ENCODE measurements at regions of chr20 and their contacts with region 1.

Region 1: GRCh38 chr20:49245921-49246740 is 26.9 kb downstream of the DDX27 start:
- DNase-seq: peak; percentile 17
- H3K4me3 ChIP-seq: no peak overlapping the region
- CTCF ChIP-seq: peak; percentile 59

Region 2: DNA sequence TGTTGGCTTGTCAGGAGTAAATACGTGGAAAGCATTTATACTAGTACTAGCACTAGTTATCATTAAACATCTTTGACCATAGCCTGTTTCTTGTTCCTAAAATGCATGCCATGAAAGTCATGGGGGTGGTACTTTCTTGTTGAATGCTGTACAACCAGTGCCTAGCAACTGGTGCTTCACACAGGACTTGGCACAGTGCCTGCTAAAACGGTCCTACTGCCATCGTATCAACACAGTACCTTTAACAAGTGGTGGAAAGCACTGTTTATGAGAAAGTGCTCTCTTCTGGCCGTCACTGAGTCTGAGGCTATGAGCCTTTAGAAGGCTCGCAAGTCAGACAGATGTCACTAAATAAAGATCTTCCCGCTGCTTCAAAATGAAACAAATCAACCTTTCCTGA is 10.1 kb after region 1 on chr20:
- CTCF ChIA-PET with region 1: interaction called, 12 read pairs
- POLR2A ChIA-PET with region 1: interaction called, 6 read pairs
- DNase-seq: no peak
- H3K4me3 ChIP-seq: no peak overlapping the region
- CTCF ChIP-seq: no peak

Region 3: GRCh38 chr20:49262444-49262843 is 16.3 kb after region 1 on chr20:
- CTCF ChIA-PET with region 1: interaction called, 21 read pairs
- POLR2A ChIA-PET with region 1: no interaction called
- DNase-seq: no peak
- H3K4me3 ChIP-seq: no peak overlapping the region
- CTCF ChIP-seq: no peak

Region 4: DNA sequence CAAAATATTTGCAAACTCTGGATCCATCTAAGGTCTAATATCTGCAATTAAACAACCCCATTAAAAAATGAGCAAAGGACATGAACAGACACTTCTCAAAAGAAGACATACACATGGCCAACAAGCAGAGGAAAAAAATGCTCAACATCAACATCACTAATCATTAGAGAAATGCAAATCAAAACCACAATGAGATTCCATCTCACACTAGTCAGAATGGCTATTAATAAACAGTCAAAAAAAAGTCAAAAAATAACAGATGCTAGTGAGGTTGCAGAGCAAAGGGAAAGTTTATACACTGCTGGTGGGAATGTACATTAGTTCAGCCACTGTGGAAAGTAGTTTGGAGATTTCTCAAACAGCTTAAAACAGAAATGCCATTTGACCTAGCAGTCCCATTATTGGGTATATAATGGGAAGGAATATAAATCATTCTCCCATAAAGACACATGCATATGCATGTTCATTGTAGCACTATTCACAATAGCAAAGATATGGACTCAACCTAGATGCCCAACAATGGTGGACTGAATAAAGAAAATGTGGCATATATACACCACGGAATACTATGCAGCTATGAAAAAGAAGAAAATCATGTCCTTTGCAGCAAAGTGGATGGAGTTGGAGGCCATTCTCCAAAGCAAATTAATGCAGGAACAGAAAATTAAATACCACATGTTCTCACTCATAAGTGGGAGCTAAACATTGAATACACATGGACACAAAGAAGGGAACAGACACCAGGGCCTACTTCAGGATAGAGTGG is 22.7 kb after region 1 on chr20:
- CTCF ChIA-PET with region 1: interaction called, 21 read pairs
- POLR2A ChIA-PET with region 1: no interaction called
- DNase-seq: no peak
- H3K4me3 ChIP-seq: no peak overlapping the region
- CTCF ChIP-seq: no peak

Region 5: GRCh38 chr20:49278036-49278817 is 32.1 kb after region 1 on chr20 and contains the start of gene ZNFX1:
- CTCF ChIA-PET with region 1: interaction called, 17 read pairs
- POLR2A ChIA-PET with region 1: interaction called, 3 read pairs
- DNase-seq: peak; percentile 78
- H3K4me3 ChIP-seq: peak within 1 kb of the TSS; percentile 99
- CTCF ChIP-seq: no peak

Region 6: DNA sequence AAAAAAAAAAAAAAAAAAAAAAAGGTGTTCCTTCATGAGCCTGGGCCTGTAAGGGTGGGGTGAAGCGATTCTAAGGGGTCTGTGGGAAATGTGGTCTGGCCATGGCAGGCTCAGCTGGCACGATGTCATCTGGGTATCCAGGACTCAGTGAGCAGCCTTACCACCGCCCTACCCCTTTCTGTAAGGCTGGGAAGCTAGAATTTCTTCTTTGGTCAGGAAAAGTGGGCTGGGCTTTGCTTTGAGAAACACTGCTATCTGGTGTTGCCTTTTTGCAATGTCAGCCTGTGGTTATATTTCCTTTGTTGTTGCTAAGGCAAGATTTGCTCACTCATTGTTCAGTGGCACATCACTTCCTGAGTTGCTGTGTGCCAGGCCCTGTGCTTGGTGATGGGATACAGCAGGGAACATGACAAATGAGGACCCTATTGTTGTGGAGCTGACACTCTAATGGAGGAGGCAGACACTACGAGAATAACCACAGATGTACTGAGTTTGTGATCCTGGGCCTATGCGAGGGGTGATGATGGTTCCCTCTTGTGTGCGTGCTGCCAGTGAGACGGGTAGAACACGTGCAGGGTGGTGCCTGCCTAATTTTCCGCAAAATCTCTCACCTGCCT is 77.6 kb after region 1 on chr20:
- CTCF ChIA-PET with region 1: interaction called, 191 read pairs
- POLR2A ChIA-PET with region 1: no interaction called
- DNase-seq: no peak
- H3K4me3 ChIP-seq: no peak overlapping the region
- CTCF ChIP-seq: peak; percentile 44

Region 7: GRCh38 chr20:49405111-49405551 is 159.0 kb after region 1 on chr20:
- CTCF ChIA-PET with region 1: no interaction called
- POLR2A ChIA-PET with region 1: no interaction called
- DNase-seq: no peak
- H3K4me3 ChIP-seq: no peak overlapping the region
- CTCF ChIP-seq: no peak

Region 8: DNA sequence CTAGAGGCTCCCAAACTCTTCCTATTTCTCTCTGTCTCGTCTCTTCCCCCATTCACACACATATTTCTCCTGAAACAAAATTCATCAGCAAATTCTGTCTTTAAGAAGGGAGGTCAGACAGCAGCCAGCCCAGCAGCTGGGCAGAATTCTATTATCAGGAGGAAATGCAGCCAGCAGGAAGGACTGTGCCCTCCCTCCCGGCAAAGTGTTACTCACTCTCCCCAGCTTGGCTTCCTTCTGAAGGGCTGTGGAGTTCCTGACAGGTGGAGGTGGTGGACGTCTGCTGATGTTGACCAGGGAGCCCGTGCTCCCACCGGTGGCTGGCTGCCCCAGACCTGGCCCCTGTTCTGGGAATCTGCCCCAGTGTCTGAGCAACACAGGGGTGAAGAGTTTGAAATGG is 199.0 kb after region 1 on chr20:
- CTCF ChIA-PET with region 1: no interaction called
- POLR2A ChIA-PET with region 1: no interaction called
- DNase-seq: no peak
- H3K4me3 ChIP-seq: no peak overlapping the region
- CTCF ChIP-seq: no peak